ENCODE measurements at regions of chr17 and their contacts with region 1.

Region 1: DNA sequence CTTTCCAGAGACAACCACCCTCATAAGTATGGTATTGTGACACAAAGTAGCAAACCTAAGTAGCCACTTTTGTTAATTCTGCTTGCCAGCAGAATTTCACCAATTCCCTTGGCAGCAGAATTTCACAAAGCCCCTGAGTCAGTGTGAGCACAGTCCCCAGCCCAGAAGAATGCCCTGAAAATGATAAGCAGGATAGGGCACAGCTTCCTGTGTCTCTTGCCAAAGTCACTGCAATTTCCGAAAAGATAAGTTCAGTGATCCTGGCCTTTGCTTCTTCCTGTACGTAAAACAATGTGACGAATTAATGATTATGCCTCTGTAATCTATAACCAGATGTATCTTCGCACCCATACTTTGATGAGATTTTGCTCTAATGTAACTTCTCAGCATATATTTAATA is 16.0 kb upstream of the WIPF2 start:
- DNase-seq: no peak
- H3K4me3 ChIP-seq: no peak overlapping the region
- H3K27ac ChIP-seq: no peak overlapping the region
- H3K4me1 ChIP-seq: peaks cover 0 to 17% (median 11%) of the 10 kb centered on the region in 4 donors
- H3K27me3 ChIP-seq: no peaks in the 10 kb centered on the region
- CTCF ChIP-seq: no peak
- EP300 ChIP-seq: no peak
- POLR2A ChIP-seq: no peak

Region 2: DNA sequence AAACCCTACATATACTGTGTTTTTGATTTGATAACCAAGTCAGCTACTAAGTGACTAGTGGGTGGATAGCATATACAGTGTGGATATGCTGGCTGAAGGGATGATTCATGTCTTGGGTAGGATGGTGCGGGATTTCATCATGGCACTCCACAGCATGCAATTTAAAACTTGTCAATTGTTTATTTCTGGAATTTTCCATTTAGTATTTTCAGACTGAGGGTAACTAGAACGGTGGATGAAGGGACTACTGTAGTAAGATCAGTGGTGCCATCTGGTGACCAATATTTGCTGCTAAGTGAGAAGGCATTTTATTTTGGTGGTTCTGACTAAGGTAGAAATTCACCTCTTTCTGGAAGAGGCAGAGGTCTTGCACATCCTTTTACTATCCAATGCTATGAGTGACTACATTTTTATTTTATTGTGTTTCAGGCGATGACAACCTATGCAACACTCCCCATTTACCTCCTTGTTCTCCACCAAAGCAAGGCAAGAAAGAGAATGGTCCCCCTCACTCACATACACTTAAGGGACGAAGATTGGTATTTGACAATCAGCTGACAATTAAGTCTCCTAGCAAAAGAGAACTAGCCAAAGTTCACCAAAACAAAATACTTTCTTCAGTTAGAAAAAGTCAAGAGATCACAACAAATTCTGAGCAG is 87.6 kb after region 1 on chr17:
- intact Hi-C with region 1: loop called (anchors 2 kb)
- DNase-seq: no peak
- H3K4me3 ChIP-seq: no peak overlapping the region
- H3K27ac ChIP-seq: peak overlapping the region in 1 of 4 donors; percentile 48
- H3K4me1 ChIP-seq: peaks cover 28 to 42% (median 32%) of the 10 kb centered on the region in 4 donors
- H3K27me3 ChIP-seq: no peaks in the 10 kb centered on the region
- CTCF ChIP-seq: peak; percentile 66 to 68 (median 68)
- EP300 ChIP-seq: no peak
- POLR2A ChIP-seq: no peak

Region 3: DNA sequence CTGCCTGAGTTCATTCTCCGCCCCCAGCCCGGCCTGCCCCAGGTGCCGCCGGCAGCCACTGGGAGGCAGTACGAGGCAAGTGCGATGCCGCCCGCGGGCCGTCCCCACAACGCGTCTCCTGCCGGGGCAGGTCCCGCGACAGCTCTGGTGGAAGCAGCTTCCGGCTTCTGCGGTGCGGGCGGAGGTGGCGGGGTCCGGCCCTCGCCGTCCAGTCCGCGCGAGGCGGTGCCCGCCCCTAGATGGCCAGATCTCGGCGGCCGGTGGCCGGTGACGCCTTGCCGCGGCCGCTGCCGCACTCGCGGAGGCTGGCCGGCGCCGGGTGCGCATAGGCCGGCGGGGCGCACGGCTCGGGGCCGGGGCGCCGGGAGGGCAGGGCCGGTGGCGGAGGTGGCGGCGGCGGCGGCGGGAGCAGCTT is 159.6 kb after region 1 on chr17:
- intact Hi-C with region 1: loop called (anchors 5 kb)
- DNase-seq: no peak
- H3K4me3 ChIP-seq: peak overlapping the region; percentile 57 to 68 (median 60)
- H3K27ac ChIP-seq: peak overlapping the region in 1 of 4 donors; percentile 39
- H3K4me1 ChIP-seq: peaks cover 10 to 47% (median 30%) of the 10 kb centered on the region in 4 donors
- H3K27me3 ChIP-seq: peaks cover 0 to 8% (median 0%) of the 10 kb centered on the region in 4 donors
- CTCF ChIP-seq: peak; percentile 43 to 57 (median 45)
- EP300 ChIP-seq: no peak
- POLR2A ChIP-seq: no peak

Measured in esophagus muscularis mucosa (tissue), 4 donors.